ENCODE measurements at regions of chr2 and their contacts with region 1.

Region 1: DNA sequence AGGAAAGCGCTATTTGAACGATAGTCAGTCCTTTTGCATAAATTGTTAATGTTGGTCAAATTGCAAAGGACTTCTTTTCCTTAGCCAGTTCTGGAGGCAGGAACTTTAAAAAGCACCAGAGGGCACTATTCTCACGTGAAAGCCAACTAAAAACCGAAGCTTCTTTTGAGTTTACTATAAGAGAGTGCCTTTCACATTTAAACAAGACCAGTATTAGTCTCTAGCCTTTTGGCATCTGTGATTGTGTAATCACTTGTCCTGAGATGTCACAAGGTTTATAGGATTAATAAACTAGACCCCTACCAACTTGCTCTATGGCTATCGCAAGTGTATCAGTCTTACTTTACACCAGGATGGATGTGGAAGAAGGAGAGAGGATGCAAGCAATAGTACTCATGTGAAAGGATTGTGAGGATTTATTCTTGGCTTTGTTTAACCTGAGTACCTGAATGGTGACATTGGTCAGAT is 14.4 kb upstream of the STAT4 start:
- DNase-seq: peak in 10 of 42 donors; percentile 8 to 66 (median 18)

Region 2: GRCh38 chr2:191515551-191515950 is 350.3 kb after region 1 on chr2:
- intact Hi-C with region 1: loop called (anchors 5 kb)
- DNase-seq: no peak

Measured in head of caudate nucleus (tissue), 42 donors.